GM10248 (cell line): ENCODE measurements at regions of chr3 and their contacts with region 1.

Region 1: DNA sequence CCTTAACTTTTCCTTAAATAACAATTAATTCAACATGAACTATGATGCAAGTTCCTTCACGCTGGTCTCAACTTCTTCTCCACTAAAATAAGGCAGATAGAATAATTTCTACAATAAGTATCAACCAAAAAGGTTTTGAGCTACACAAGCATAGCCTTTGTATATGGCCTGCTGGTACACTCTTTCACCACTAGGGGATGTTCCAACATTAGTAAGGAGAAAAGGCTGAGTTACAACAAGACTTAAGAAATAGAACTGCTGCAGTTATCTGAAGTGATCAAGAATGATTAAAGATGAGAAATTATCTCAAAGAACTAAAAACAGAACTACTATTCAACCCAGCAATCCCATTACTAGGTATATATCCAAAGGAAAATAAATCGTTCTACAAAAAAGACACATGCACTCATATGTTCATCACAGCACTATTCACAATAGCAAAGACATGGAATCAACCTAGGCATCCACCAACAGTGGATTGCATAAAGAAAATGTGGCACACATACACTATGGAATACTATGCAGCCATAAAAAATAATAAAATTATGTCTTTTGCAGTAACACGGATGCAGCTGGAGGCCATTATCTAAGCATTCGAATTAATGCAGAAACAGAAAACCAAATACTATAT is 14.4 kb downstream of the ATP13A3 start:
- DNase-seq: peak; percentile 23
- CTCF ChIP-seq: peak; percentile 93

Region 2: GRCh38 chr3:193743702-193744047 is 728.7 kb before region 1 on chr3:
- CTCF ChIA-PET with region 1: no interaction called
- POLR2A ChIA-PET with region 1: no interaction called
- DNase-seq: no peak
- CTCF ChIP-seq: no peak

Region 3: DNA sequence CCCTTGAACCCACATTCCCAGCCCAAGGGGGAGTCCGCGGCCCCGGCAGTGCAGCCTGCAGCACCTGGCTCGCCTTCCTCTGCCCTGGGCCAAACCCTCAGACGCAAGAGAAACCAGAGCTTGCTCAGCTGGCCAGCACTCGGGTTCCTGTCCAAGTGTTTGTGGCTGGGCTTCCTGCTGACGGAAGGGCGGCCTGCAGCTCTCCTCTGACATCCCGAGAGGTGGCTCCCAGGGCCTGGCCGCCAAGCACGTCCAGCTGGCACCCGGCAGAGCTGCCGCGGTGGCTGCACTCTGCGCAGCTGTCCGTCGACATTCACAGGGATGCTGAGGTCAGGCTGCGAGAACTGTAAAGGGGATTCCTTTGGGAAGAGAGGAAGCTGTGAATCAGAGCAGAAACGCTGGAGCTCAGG is 206.9 kb before region 1 on chr3:
- CTCF ChIA-PET with region 1: no interaction called
- POLR2A ChIA-PET with region 1: no interaction called
- DNase-seq: peak; percentile 29
- CTCF ChIP-seq: no peak

Region 4: GRCh38 chr3:194450341-194450740 is 22.1 kb before region 1 on chr3:
- CTCF ChIA-PET with region 1: interaction called, 11 read pairs
- POLR2A ChIA-PET with region 1: no interaction called
- DNase-seq: no peak
- CTCF ChIP-seq: no peak

Region 5: GRCh38 chr3:194458131-194458530 is 14.3 kb before region 1 on chr3:
- CTCF ChIA-PET with region 1: interaction called, 12 read pairs
- POLR2A ChIA-PET with region 1: no interaction called
- DNase-seq: no peak
- CTCF ChIP-seq: no peak

Region 6: GRCh38 chr3:194486540-194487288 is 14.3 kb after region 1 on chr3 and contains the start of gene ATP13A3:
- CTCF ChIA-PET with region 1: interaction called, 55 read pairs
- POLR2A ChIA-PET with region 1: interaction called, 3 read pairs
- DNase-seq: peak; percentile 97
- CTCF ChIP-seq: no peak

Region 7: DNA sequence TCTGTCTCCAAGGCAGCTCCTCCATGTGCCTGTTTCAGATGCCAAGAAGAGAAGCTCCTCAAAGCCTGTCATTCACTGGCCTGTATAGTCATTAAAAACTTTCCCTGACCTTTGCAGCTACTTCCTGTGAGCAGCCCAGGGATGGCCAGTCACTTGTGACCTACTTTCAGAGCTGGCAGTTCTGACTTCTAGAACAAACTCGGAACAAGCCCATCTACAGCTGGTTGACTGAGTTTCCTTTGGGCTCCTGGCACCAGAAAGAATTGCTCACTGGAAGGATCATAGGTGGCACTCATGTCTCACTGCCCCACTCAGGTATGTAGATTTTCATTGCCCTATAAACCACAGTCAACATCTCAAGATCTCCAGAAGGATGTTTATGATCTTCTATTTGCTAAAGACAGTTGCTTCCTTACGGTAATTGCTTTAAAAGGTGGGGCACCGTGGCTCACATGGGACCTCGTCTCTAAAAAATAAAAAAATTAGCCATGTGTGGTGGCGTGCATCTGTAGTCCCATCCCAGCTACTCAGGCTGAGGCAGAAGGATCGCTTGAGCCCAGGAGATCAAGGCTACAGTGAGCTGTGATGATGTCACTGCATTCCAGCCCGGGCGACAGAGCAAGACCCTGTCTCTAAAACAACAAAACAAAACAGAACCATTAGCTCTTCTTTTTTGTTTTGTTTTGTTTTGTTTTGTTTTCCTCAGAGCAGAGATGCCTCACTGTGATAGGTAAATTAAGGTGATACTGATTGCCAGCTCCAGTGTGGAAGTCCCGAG is 25.6 kb after region 1 on chr3:
- CTCF ChIA-PET with region 1: interaction called, 13 read pairs
- POLR2A ChIA-PET with region 1: interaction called, 6 read pairs
- DNase-seq: no peak
- CTCF ChIP-seq: no peak

Region 8: GRCh38 chr3:194573691-194574437 is 101.5 kb after region 1 on chr3:
- CTCF ChIA-PET with region 1: interaction called, 13 read pairs
- POLR2A ChIA-PET with region 1: no interaction called
- DNase-seq: peak; percentile 86
- CTCF ChIP-seq: peak; percentile 89

Region 9: DNA sequence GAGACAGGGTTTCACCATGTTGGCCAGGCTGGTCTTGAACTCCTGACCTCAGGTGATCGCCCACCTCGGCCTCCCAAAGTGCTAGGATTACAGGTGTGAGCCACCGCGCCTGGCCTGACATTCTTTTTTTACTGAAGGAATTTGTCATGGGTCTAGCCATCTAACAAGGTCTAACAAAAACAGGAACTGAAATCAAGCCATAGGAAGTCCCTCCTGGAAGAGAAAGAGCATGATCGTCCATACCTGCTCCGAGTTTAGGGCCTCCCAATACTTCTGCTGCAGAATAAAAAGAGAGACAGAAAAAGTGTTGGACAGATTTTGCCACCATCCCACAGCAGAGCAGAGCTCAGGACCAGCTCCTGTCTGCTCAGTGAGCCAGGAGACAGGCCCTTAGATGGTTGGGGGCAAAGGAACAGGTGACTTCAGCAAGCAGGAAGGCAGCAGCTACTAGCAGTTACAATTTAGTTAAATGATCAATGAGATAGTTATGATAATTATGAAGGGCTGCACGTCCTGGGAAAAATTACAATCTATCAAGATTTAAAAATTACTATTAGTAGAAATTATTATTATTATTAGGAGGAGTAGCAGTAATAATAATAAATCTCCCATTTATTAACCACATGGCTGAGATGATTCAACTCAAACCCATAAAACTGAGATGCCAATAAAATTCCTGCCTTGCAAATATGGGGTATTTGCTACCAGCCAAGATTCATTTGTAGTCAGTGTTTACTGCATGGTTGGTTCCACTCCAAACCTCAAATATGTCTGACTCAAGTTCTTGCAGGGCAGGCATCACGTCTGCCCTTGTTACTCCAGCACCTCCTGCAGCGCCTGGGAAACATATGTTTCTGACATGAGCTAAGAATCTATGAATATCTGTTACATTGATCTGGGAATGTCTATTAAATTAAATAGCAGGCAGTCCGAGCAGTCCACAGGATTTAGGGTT is 120.7 kb after region 1 on chr3:
- CTCF ChIA-PET with region 1: interaction called, 20 read pairs
- POLR2A ChIA-PET with region 1: no interaction called
- DNase-seq: no peak
- CTCF ChIP-seq: no peak